Left ventricle myocardium superior (tissue), 1 donor: ENCODE measurements at regions of chr7 and their contacts with region 1.

Region 1: GRCh38 chr7:135169141-135169960 is 1.2 kb downstream of the CYREN start:
- DNase-seq: peak; percentile 43
- ATAC-seq: no peak

Region 2: DNA sequence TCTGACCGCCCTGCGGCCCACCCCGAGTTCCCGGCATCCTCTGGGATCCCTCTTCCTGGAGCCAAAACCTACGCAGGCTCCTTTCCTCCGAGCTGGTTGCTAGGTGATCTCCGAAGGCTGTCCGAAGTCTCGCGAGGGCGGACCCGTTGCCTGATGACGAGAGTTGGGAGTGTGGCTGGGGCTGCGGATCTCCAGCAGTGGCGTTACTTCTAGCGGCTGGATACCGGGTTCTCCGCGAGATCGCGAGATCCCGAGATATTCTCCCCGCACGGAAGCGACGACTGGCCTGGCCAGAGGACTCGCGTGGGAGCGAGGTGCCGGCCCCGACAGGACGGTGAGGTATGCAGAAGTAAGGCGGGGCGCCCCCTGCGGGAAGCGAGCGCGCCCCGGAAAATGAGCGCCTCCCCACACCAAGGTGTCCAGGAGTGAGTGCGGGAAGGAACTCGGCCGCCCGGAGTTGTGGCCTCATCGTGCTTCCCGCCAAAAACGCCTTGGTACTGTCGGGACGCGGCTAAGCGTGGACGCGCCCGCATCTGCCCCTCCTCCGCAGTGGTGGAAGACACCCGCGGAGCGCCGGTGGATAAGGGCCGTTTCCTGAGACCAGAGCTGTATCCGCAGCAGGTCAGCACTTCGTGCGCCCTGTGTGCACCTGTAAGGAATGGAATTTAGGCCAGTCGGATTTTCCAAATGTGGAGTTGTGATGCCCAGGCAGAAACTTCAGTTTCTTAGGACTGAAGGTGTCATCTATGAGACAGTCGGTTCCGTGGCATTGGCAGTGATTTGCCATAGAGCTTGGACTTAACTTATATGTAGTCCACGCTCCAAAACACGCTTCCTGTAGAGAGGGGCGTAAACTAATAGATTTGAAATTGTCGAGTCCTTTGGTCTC is 182.7 kb before region 1 on chr7 and contains the start of gene AGBL3:
- intact Hi-C with region 1: loop called (anchors 5 kb)
- DNase-seq: peak; percentile 98
- ATAC-seq: peak; percentile 99
- total RNA-seq, gene AGBL3: 1.1 TPM